H1 (cell line): ENCODE measurements at regions of chr3 and their contacts with region 1.

Region 1: GRCh38 chr3:53195602-53196574 is 34.9 kb downstream of the PRKCD start:
- DNase-seq: peak in 1 of 2 experiments; percentile 92
- H3K4me3 ChIP-seq: no peak overlapping the region
- H3K27ac ChIP-seq: no peak overlapping the region
- H3K4me1 ChIP-seq: peaks cover 0 to 19% (median 10%) of the 10 kb centered on the region in 4 experiments; a peak in 5 of 7 replicates
- H3K27me3 ChIP-seq: no peaks in the 10 kb centered on the region; a peak in 1 of 7 replicates
- CTCF ChIP-seq: peak in 2 of 3 experiments; percentile 95 to 97; a peak in 3 of 4 replicates
- EP300 ChIP-seq: no peak
- POLR2A ChIP-seq: no peak
- RAD21 ChIP-seq: peak; percentile 90 to 92

Region 2: DNA sequence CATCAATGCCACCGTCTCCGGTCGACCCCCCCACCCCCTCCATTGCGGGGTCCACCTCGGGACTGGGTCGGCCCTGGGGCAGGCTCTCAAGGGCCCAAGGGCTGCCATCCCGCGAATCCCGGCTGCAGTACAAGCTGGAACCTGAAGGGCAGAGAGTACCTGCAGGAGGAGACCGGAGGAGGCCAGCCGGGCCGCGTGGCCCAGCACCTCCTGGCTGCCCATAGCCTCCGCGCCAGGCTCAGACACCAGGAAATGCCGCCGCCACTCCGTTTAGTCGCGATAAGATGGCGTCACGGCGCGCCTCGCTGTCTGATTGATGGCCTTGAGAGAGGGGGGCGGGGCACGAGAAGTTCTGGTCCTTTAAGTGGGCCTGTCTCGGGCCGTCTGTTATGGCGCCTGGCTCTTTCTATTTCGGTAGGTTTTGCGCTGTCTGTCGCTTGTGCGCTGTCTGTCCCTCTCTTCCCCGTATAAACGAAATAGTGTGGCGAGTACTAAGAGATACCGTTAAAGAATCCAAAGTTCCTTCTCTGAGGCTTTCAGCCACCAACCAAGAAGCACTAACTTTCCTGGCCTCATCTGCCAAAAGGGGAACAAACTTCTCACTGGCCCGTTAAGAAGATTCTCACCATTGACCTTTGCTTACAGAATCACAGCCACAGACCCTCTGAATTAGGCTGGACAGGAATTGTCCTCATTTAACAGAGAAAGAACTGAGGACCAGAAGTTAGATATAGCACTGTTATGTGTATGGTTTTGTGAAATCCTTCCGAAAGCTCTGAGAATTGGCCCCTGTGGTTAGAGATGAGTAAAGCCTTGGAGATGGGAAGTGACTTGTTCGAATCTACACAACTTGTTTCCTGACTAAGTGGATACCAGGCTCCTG is 65.5 kb before region 1 on chr3 and contains the start of gene RFT1:
- CTCF ChIA-PET with region 1: interaction called, 164 read pairs
- POLR2A ChIA-PET with region 1: interaction called, 22 read pairs
- DNase-seq: peak; percentile 87 to 98
- H3K4me3 ChIP-seq: peak within 1 kb of the TSS; percentile 88 to 94 (median 91)
- H3K27ac ChIP-seq: peak within 1 kb of the TSS; percentile 62
- H3K4me1 ChIP-seq: peaks cover 0 to 5% (median 3%) of the 10 kb centered on the region in 4 experiments; a peak in 3 of 7 replicates
- H3K27me3 ChIP-seq: no peaks in the 10 kb centered on the region
- CTCF ChIP-seq: peak; percentile 15 to 57 (median 36)
- EP300 ChIP-seq: peak in 1 of 2 experiments; percentile 55; a peak in 1 of 3 replicates
- POLR2A ChIP-seq: peak; percentile 89 to 97
- RAD21 ChIP-seq: peak in 1 of 2 experiments; percentile 13; a peak in 2 of 4 replicates
- total RNA-seq, gene RFT1: 24.4 and 27.7 TPM in 2 replicates

Region 3: GRCh38 chr3:53155760-53156159 is 40.1 kb before region 1 on chr3:
- CTCF ChIA-PET with region 1: interaction called, 30 read pairs
- POLR2A ChIA-PET with region 1: interaction called, 3 read pairs
- DNase-seq: no peak
- H3K4me3 ChIP-seq: no peak overlapping the region
- H3K27ac ChIP-seq: no peak overlapping the region
- H3K4me1 ChIP-seq: peaks cover 0 to 25% (median 16%) of the 10 kb centered on the region in 4 experiments; a peak in 6 of 7 replicates
- H3K27me3 ChIP-seq: peaks cover 0 to 17% (median 4%) of the 10 kb centered on the region in 4 experiments; a peak in 3 of 7 replicates
- CTCF ChIP-seq: no peak
- EP300 ChIP-seq: no peak
- POLR2A ChIP-seq: no peak
- RAD21 ChIP-seq: no peak

Region 4: GRCh38 chr3:53166781-53167291 is 29.1 kb before region 1 on chr3:
- CTCF ChIA-PET with region 1: interaction called, 31 read pairs
- POLR2A ChIA-PET with region 1: interaction called, 6 read pairs
- DNase-seq: no peak
- H3K4me3 ChIP-seq: no peak overlapping the region
- H3K27ac ChIP-seq: no peak overlapping the region
- H3K4me1 ChIP-seq: peaks cover 3 to 46% (median 30%) of the 10 kb centered on the region in 4 experiments
- H3K27me3 ChIP-seq: peaks cover 0 to 3% (median 0%) of the 10 kb centered on the region in 4 experiments; a peak in 3 of 7 replicates
- CTCF ChIP-seq: no peak
- EP300 ChIP-seq: no peak
- POLR2A ChIP-seq: no peak
- RAD21 ChIP-seq: no peak

Region 5: GRCh38 chr3:53219895-53220483 is 24.1 kb after region 1 on chr3:
- CTCF ChIA-PET with region 1: interaction called, 12 read pairs
- POLR2A ChIA-PET with region 1: interaction called, 5 read pairs
- DNase-seq: peak; percentile 78 to 97
- H3K4me3 ChIP-seq: no peak overlapping the region
- H3K27ac ChIP-seq: no peak overlapping the region
- H3K4me1 ChIP-seq: peaks cover 0 to 2% (median 0%) of the 10 kb centered on the region in 4 experiments; a peak in 1 of 7 replicates
- H3K27me3 ChIP-seq: no peaks in the 10 kb centered on the region
- CTCF ChIP-seq: peak in 2 of 3 experiments; percentile 97 to 98; a peak in 3 of 4 replicates
- EP300 ChIP-seq: no peak
- POLR2A ChIP-seq: peak in 1 of 2 experiments; percentile 27; a peak in 1 of 3 replicates
- RAD21 ChIP-seq: peak; percentile 85 to 89

Region 6: DNA sequence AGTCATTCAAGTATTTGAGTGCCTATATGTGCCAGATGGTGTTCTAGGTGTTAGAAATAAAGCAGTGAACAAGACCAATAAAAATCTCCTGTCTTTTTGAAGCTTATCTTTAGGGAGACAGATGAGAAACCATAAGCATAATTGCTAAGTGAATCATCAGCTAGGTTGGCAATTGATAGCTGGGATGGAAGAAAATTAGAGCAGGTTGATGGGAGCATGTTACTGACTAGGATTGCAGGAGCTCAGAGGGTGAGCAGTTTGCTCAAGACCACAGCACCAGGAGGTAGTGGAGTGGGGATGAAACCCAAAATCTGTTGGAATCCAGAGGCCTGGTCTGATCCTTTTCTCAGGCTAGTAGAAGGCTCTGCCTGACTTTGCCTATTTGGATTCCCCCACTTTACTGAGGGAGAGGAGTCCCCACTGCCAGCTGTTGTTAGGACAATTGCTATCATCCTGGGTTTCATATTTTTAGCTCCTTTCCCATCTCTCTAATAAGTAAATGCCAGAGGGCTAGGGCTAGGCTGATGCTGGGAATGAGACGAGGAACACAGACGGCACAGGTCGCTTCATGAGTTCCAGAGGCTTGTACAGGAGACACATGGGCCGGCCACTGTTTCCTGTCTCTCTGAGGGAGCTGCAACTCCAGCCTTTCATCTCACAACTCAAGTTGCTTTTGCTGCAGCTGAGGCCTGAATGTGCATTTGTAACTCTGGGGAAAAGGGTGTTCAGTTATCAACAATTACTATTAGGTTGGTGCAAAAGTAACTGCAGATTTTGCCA is 401.4 kb after region 1 on chr3:
- CTCF ChIA-PET with region 1: no interaction called
- POLR2A ChIA-PET with region 1: no interaction called
- DNase-seq: no peak
- H3K4me3 ChIP-seq: no peak overlapping the region
- H3K27ac ChIP-seq: no peak overlapping the region
- H3K4me1 ChIP-seq: no peaks in the 10 kb centered on the region
- H3K27me3 ChIP-seq: no peaks in the 10 kb centered on the region
- CTCF ChIP-seq: no peak
- EP300 ChIP-seq: no peak
- POLR2A ChIP-seq: no peak
- RAD21 ChIP-seq: no peak